ENCODE measurements at regions of chr7 and their contacts with region 1.

Region 1: DNA sequence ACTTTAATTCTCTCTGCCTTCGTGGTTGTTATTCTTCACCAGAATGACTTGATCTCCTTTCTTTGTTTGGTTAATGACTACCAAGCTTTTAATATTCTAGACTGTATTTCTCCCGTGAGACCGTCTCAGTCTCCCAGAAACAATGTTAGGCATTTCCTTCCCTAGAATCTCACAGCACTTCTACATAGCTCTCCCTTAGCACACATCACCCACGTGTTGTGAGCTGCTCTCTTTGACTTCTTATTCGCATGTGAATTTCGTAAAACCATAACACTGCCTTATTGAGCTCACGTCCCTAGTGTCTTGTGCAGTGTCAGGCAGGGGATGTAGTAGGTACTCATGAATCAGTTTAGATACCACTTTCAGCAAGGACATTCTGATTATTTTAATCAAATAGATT is 57.5 kb upstream of the MGAM2 start:
- DNase-seq: no peak
- ATAC-seq: no peak
- H3K4me3 ChIP-seq: no peak overlapping the region
- H3K27ac ChIP-seq: no peak overlapping the region
- H3K4me1 ChIP-seq: no peaks in the 10 kb centered on the region
- H3K27me3 ChIP-seq: no peaks in the 10 kb centered on the region
- CTCF ChIP-seq: no peak
- POLR2A ChIP-seq: no peak

Region 2: DNA sequence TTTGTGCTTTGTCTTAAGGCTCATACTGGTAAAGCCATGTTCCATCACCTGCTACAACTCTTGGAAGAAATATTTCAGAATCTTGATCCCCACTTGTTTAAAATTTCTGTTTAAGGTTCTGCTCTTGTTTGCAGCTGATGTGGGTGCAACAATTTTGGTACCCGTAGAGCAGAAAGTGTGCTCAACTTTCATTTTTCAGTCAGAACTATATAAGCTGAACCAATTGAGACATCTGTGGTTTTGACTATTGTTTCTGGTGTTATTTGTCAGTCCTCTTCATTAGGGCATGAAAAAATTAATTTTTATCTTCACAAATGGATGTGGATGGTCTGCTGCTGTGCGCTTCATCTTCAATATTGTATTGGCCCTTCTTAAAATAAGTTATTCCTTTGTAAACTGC is 47.4 kb before region 1 on chr7:
- in situ Hi-C with region 1: no loop called
- intact Hi-C with region 1: loop called (anchors 2 kb)
- DNase-seq: no peak
- ATAC-seq: no peak
- H3K4me3 ChIP-seq: no peak overlapping the region
- H3K27ac ChIP-seq: no peak overlapping the region
- H3K4me1 ChIP-seq: no peaks in the 10 kb centered on the region
- H3K27me3 ChIP-seq: no peaks in the 10 kb centered on the region
- CTCF ChIP-seq: no peak
- POLR2A ChIP-seq: no peak